Posterior vena cava (tissue), 2 donors: ENCODE measurements at regions of chr4 and their contacts with region 1.

Region 1: GRCh38 chr4:23084559-23085248 is 392.0 kb downstream of the GBA3 start:
- DNase-seq: no peak

Region 2: GRCh38 chr4:23114538-23114937 is 29.8 kb after region 1 on chr4:
- intact Hi-C with region 1: loop called in 1 of 2 experiments (anchors 1 kb)
- DNase-seq: no peak

Region 3: GRCh38 chr4:23903859-23904438 is 819.2 kb after region 1 on chr4:
- intact Hi-C with region 1: no loop called
- DNase-seq: no peak